ENCODE measurements at regions of chr3 and their contacts with region 1.

Region 1: DNA sequence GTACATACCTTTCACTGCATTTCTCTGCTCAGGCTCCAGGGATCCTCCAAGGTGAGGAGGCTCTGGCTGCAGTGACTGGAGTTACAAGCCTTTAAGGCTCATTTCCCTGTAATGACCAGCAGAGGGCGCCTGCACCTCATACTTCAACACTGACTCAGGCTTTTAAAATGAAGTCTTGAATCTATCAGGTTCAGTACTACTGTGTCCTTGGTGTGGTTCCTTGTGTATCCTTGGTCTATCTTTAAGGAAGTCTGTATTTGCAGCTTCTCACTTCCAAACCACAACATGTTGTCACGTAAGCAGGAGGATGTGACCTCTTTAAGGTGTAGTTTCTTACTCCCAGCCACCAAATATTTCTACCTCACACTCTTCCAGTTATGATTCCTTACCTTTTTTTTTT is 122.5 kb upstream of the ZBED2 start:
- DNase-seq: no peak
- H3K4me3 ChIP-seq: no peak overlapping the region
- H3K27me3 ChIP-seq: no peaks in the 10 kb centered on the region
- CTCF ChIP-seq: peak; percentile 87

Region 2: DNA sequence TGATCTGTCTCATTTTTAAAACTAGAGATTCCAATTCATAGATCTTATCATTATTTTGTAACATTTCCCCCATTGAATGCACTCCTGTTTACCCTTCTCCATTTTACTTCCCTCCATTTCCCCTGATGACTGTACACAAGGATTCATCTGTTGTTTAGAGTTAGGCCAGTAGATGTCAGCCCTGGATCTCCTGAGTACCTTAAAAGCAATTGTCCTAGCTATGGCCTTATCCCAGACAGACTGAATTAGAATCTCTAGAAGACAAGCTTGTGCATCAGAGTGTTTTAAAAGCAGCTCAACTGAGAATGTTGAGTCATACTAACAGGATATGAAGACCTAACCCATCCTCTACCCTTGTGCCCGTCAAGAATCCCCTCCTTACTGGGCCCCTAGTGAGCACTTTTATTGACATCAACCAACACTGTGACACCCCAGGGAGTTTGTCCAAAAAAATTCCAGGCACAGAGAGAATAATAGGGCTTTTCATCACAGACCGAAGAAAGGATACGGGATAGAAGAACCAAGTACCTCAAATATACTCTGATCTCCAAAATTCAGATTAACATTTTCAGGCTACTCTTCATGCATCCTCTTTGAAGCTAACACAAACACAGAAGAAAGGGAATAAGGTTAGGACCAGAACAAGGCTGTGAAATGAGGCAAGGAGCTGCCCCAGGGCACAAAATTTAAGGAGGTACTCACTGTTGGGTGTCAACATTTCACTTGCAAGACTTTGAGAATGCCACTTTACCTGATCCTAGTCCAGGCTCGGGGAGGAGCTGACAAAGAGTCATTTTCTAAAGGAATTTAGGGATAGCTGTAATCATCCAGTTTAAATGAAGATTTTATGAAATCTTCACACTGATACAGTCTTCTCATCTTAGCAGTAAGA is 139.6 kb before region 1 on chr3:
- CTCF ChIA-PET with region 1: interaction called, 54 read pairs
- POLR2A ChIA-PET with region 1: no interaction called
- DNase-seq: peak; percentile 44
- H3K4me3 ChIP-seq: no peak overlapping the region
- H3K27me3 ChIP-seq: no peaks in the 10 kb centered on the region
- CTCF ChIP-seq: peak; percentile 76

Region 3: DNA sequence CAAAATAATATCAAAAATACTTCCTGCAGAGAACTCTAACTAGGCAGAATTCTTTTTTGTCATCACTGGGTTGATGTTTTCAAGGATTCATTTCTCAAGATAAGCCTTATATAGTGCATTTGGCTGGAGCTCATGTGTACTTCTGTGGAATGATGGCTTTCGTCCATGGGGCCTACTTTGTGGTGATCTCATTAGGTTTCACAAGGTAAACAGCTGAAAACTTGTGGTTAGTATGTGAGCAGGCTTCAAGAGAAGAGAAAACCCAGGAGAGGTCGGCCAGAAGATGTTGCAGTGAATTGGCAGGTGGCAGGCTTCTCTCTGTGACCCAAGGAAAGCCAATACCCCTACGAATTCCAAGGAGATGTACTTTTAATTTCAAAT is 20.1 kb after region 1 on chr3:
- CTCF ChIA-PET with region 1: interaction called, 12 read pairs
- POLR2A ChIA-PET with region 1: no interaction called
- DNase-seq: peak; percentile 91
- H3K4me3 ChIP-seq: no peak overlapping the region
- H3K27me3 ChIP-seq: no peaks in the 10 kb centered on the region
- CTCF ChIP-seq: no peak

Region 4: DNA sequence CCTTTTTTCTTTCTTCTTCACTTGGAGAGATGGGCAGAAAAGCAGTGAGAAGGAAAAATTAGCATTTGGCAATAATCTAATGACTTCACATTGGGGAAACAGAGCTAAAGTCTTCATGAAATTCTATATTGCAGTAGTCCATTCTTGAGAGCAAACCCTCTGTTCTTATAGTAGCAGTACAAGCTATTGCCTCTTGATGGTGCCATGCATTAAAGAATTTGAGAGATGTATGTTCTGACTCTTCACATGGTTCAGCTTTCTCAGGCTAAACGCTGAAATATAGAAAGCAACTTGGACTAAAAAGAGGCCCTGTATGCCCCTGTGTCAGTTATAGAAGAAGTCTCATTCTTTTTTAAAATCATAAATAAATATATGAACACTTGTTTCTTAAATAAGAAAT is 177.5 kb after region 1 on chr3:
- CTCF ChIA-PET with region 1: interaction called, 11 read pairs
- POLR2A ChIA-PET with region 1: no interaction called
- DNase-seq: no peak
- H3K4me3 ChIP-seq: no peak overlapping the region
- H3K27me3 ChIP-seq: no peaks in the 10 kb centered on the region
- CTCF ChIP-seq: peak; percentile 33

Region 5: GRCh38 chr3:111967651-111968274 is 250.2 kb after region 1 on chr3:
- CTCF ChIA-PET with region 1: interaction called, 157 read pairs
- POLR2A ChIA-PET with region 1: no interaction called
- DNase-seq: no peak
- H3K4me3 ChIP-seq: no peak overlapping the region
- H3K27me3 ChIP-seq: no peaks in the 10 kb centered on the region
- CTCF ChIP-seq: peak; percentile 81

Region 6: GRCh38 chr3:112013058-112013783 is 295.6 kb after region 1 on chr3:
- CTCF ChIA-PET with region 1: interaction called, 80 read pairs
- POLR2A ChIA-PET with region 1: no interaction called
- DNase-seq: no peak
- H3K4me3 ChIP-seq: no peak overlapping the region
- H3K27me3 ChIP-seq: no peaks in the 10 kb centered on the region
- CTCF ChIP-seq: peak; percentile 75